ENCODE measurements at regions of chr2 and their contacts with region 1.

Region 1: DNA sequence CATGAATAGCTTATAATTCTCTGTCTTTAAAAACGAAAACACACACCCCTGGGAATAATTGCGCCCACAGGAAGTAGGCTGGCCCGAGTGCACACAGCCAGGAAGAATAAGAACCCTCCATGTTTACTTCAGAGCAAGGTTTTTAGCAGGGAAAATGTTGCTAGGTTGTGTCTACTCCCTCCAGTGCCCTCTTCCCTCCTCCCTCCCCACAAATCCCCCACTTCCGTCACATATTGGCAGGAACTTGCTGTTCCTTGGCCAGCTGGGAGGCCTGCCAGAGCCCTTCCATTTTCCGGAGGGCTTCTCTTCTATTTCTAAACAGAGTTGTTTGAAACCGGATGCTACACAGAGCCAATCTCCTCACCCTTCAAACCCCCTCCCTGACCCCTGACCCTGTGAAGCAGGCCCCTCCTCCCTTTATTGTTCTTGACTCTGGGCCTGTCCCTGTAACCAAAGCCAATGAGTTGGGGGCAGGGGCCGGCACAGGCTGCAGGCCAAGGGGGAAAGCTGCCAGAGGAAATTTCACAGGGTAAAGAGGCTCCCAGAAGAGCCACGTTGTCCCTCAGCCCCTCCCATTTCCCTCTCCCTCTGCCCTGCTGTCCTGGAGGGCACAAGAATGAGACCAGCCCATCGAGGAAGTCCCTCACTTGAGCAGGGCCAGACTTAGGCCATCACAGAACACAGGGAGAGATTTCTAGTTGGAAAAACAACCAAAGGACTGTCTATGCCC is 49.8 kb upstream of the LGALSL start:
- DNase-seq: peak; percentile 89 to 92 (median 90)
- ATAC-seq: peak; percentile 89 to 94 (median 94)
- H3K4me3 ChIP-seq: peak overlapping the region in 8 of 12 donors; percentile 2 to 29 (median 6)
- H3K27ac ChIP-seq: peak overlapping the region; percentile 71 to 97 (median 86)
- H3K4me1 ChIP-seq: peaks cover 8 to 49% (median 36%) of the 10 kb centered on the region in 12 donors
- H3K27me3 ChIP-seq: no peaks in the 10 kb centered on the region
- CTCF ChIP-seq: no peak
- POLR2A ChIP-seq: no peak

Region 2: DNA sequence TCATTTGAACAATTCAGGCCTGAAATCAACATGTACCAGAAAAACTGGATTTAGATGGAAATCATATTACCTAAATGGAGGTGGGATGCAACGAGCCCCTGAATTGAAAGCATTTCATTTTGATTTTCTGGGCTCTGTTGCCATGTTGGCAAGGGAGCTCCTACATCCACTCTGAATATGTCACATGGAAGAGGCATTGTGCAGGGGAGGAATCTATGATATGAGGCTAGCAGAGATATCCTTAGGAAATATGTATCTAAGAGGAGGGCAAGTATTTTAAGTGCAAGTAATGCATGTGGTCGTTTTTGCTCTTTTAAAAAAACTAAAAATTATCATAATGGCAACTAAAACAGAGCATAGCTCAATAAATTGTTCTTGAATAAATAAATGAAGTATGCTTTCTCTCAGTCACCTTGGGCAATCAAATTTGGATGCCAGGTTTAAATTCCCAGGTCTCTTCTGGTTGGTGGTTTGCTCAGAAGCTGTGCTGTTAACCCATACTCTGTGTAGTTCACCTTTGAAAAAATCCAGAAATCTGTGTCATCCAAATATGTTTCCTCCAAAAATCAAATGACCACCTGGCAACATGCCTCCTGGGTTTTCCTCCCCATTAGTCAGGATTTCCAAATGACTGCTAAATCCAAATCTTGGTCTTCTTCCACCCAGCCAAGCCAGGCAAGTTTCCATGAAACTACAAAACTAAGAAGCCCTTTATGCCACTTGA is 43.3 kb after region 1 on chr2:
- intact Hi-C with region 1: loop called in 5 of 10 experiments (anchors 5 to 10 kb)
- DNase-seq: no peak
- ATAC-seq: peak in 1 of 4 donors; percentile 65
- H3K4me3 ChIP-seq: no peak overlapping the region
- H3K27ac ChIP-seq: peak overlapping the region in 3 of 12 donors; percentile 23 to 47 (median 25)
- H3K4me1 ChIP-seq: peaks cover 0 to 17% (median 1%) of the 10 kb centered on the region in 12 donors
- H3K27me3 ChIP-seq: no peaks in the 10 kb centered on the region
- CTCF ChIP-seq: no peak
- POLR2A ChIP-seq: no peak

Region 3: DNA sequence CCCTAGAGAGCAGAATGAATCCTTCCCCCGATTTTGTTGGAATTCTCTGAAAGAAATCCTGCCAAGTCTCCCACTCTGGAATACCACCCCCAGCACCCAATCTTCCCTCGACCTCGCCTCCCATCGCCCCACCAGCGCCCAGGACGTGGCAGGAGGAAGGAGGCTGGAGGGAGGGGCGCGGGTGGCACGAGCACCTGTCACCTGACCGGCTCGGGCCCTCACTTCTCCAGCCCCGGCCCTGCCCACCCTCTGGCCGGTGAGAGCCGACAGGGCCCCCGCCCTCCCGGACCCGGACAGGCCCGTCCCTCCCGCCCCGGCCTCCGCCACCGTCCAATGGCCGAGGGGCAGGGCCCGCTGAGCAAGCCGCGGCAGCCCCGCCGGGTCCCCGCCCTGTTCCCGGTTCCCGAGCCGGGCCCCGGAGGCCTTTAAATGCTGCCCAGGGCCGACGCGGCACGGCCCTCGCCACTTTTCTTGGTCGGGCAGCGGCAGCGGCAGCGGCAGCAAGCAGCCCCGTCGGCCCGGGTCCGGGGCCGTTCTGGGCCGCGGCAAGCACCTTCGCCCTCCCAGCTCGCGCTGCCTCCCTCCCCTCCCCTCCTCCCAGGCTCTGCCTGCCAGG is 49.7 kb after region 1 on chr2 and contains the start of gene LGALSL:
- intact Hi-C with region 1: loop called in 7 of 10 experiments (anchors 1 to 10 kb)
- DNase-seq: peak; percentile 81 to 89 (median 82)
- ATAC-seq: peak; percentile 68 to 91 (median 89)
- H3K4me3 ChIP-seq: peak within 1 kb of the TSS; percentile 74 to 93 (median 80)
- H3K27ac ChIP-seq: peak within 1 kb of the TSS; percentile 87 to 98 (median 94)
- H3K4me1 ChIP-seq: peaks cover 0 to 38% (median 18%) of the 10 kb centered on the region in 12 donors
- H3K27me3 ChIP-seq: peaks cover 0 to 11% (median 0%) of the 10 kb centered on the region in 9 donors
- CTCF ChIP-seq: no peak
- POLR2A ChIP-seq: peak in 1 of 2 donors; percentile 70
- total RNA-seq, gene LGALSL: 6.4 to 31.6 (median 11.8) TPM